Activated CD8-positive, alpha-beta T cell treated with anti-CD3 and anti-CD28 coated beads for 36 hours (primary cell): ENCODE measurements at regions of chr17 and their contacts with region 1.

Region 1: DNA sequence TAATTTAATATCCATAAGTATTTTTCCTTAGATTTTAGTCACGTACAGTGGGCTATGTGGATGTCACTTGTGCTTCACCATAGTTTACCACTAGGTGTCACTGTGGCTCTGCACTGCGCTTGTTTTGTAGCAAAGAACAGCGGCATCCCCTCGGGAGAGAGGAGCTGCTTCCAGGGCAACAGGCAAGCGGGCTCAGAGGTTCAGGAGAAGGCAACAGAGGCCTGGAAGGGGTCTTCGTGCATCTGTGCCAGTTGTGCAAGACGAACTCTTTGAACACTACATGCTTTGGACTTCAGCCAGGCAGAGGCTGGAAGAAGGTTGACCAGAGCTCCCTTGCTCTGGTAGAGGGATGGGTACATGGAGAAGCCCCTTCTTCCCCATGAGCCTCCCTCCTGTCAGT is 20.6 kb downstream of the CYB561 start:
- DNase-seq: peak; percentile 79
- ATAC-seq: peak; percentile 92
- H3K4me3 Mint-ChIP-seq: no peak overlapping the region
- H3K27ac Mint-ChIP-seq: no peak overlapping the region
- H3K4me1 Mint-ChIP-seq: peaks cover 28% of the 10 kb centered on the region
- H3K27me3 Mint-ChIP-seq: no peaks in the 10 kb centered on the region
- CTCF ChIP-seq: peak; percentile 97

Region 2: GRCh38 chr17:63413128-63413527 is 12.4 kb before region 1 on chr17:
- CTCF ChIA-PET with region 1: interaction called, 29 read pairs
- POLR2A ChIA-PET with region 1: interaction called, 3 read pairs
- intact Hi-C with region 1: no loop called
- DNase-seq: no peak
- ATAC-seq: no peak
- H3K4me3 Mint-ChIP-seq: no peak overlapping the region
- H3K27ac Mint-ChIP-seq: no peak overlapping the region
- H3K4me1 Mint-ChIP-seq: no peaks in the 10 kb centered on the region
- H3K27me3 Mint-ChIP-seq: no peaks in the 10 kb centered on the region
- CTCF ChIP-seq: no peak

Region 3: DNA sequence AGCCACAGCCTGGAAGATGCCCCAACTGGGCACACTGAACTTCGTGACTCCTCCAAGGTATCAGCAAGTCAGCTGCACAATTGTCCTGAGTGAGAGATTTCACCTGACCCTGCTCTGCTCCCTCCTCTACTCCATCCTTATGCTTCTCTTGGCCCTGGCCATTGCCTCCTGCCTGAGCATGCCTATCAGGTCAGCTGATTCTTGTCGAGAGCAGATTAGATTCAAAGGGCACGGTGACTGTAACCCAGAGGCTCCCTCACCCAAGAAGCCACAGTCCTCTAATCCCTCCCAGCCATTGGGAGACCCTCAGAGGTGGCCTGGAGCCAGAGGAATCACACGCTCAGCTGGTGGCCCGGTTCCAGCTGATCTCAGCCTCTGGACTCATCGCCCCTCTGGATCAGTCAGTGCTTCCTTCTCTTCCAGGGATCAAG is 27.6 kb after region 1 on chr17:
- CTCF ChIA-PET with region 1: interaction called, 32 read pairs
- POLR2A ChIA-PET with region 1: no interaction called
- intact Hi-C with region 1: no loop called
- DNase-seq: no peak
- ATAC-seq: no peak
- H3K4me3 Mint-ChIP-seq: no peak overlapping the region
- H3K27ac Mint-ChIP-seq: no peak overlapping the region
- H3K4me1 Mint-ChIP-seq: peaks cover 11% of the 10 kb centered on the region
- H3K27me3 Mint-ChIP-seq: peaks cover 3% of the 10 kb centered on the region
- CTCF ChIP-seq: no peak

Region 4: GRCh38 chr17:63497708-63498483 is 72.4 kb after region 1 on chr17:
- CTCF ChIA-PET with region 1: interaction called, 14 read pairs
- POLR2A ChIA-PET with region 1: no interaction called
- intact Hi-C with region 1: no loop called
- DNase-seq: peak; percentile 29
- ATAC-seq: no peak
- H3K4me3 Mint-ChIP-seq: no peak overlapping the region
- H3K27ac Mint-ChIP-seq: no peak overlapping the region
- H3K4me1 Mint-ChIP-seq: peaks cover 2% of the 10 kb centered on the region
- H3K27me3 Mint-ChIP-seq: peaks cover 5% of the 10 kb centered on the region
- CTCF ChIP-seq: no peak

Region 5: DNA sequence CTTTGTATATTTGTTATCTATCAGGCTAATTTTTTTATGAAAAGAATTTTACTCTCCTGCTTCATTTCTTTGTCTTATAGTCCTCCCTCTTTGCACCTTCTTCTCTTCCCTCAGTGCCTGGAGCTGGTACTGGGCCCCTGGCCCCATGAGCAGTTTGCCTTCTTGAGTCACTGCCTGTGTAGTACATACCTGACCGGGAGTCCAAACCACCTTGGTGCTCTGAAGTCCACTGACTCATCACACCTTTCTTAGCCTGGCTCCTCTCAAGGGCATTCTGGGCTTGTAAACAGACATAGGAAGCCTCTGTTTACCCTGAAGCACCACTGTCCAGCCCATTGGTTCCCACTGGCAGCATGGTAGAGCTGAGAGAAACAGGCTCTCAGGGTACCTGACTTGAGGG is 164.2 kb after region 1 on chr17:
- CTCF ChIA-PET with region 1: interaction called, 11 read pairs
- POLR2A ChIA-PET with region 1: no interaction called
- intact Hi-C with region 1: no loop called
- DNase-seq: no peak
- ATAC-seq: no peak
- H3K4me3 Mint-ChIP-seq: no peak overlapping the region
- H3K27ac Mint-ChIP-seq: no peak overlapping the region
- H3K4me1 Mint-ChIP-seq: peaks cover 15% of the 10 kb centered on the region
- H3K27me3 Mint-ChIP-seq: no peaks in the 10 kb centered on the region
- CTCF ChIP-seq: no peak

Region 6: GRCh38 chr17:63621766-63622519 is 196.5 kb after region 1 on chr17 and contains the start of gene MAP3K3:
- CTCF ChIA-PET with region 1: interaction called, 14 read pairs
- POLR2A ChIA-PET with region 1: interaction called, 3 read pairs
- intact Hi-C with region 1: no loop called
- DNase-seq: peak; percentile 99
- ATAC-seq: peak; percentile 91
- H3K4me3 Mint-ChIP-seq: peak within 1 kb of the TSS; percentile 99
- H3K27ac Mint-ChIP-seq: peak within 1 kb of the TSS; percentile 95
- H3K4me1 Mint-ChIP-seq: peaks cover 38% of the 10 kb centered on the region
- H3K27me3 Mint-ChIP-seq: no peaks in the 10 kb centered on the region
- CTCF ChIP-seq: no peak
- total RNA-seq, gene MAP3K3: 20.6 to 22.5 TPM